Aorta (tissue), 5 donors: ENCODE measurements at regions of chr10 and their contacts with region 1.

Region 1: GRCh38 chr10:121598207-121598862 is at the start of gene FGFR2:
- DNase-seq: peak; percentile 81 to 93
- ATAC-seq: peak; percentile 92
- H3K4me3 ChIP-seq: peak within 1 kb of the TSS; percentile 62 to 73
- H3K27ac ChIP-seq: peak within 1 kb of the TSS in 1 of 2 donors; percentile 85
- H3K4me1 ChIP-seq: no peaks in the 10 kb centered on the region
- H3K27me3 ChIP-seq: no peaks in the 10 kb centered on the region
- total RNA-seq, gene FGFR2: 5.8 to 13.1 TPM

Region 2: GRCh38 chr10:121096617-121097461 is 501.5 kb before region 1 on chr10:
- intact Hi-C with region 1: loop called in 1 of 2 experiments (anchors 10 kb)
- DNase-seq: peak in 1 of 2 donors; percentile 53
- ATAC-seq: peak; percentile 53
- H3K4me3 ChIP-seq: no peak overlapping the region
- H3K27ac ChIP-seq: no peak overlapping the region
- H3K4me1 ChIP-seq: no peaks in the 10 kb centered on the region
- H3K27me3 ChIP-seq: no peaks in the 10 kb centered on the region

Region 3: DNA sequence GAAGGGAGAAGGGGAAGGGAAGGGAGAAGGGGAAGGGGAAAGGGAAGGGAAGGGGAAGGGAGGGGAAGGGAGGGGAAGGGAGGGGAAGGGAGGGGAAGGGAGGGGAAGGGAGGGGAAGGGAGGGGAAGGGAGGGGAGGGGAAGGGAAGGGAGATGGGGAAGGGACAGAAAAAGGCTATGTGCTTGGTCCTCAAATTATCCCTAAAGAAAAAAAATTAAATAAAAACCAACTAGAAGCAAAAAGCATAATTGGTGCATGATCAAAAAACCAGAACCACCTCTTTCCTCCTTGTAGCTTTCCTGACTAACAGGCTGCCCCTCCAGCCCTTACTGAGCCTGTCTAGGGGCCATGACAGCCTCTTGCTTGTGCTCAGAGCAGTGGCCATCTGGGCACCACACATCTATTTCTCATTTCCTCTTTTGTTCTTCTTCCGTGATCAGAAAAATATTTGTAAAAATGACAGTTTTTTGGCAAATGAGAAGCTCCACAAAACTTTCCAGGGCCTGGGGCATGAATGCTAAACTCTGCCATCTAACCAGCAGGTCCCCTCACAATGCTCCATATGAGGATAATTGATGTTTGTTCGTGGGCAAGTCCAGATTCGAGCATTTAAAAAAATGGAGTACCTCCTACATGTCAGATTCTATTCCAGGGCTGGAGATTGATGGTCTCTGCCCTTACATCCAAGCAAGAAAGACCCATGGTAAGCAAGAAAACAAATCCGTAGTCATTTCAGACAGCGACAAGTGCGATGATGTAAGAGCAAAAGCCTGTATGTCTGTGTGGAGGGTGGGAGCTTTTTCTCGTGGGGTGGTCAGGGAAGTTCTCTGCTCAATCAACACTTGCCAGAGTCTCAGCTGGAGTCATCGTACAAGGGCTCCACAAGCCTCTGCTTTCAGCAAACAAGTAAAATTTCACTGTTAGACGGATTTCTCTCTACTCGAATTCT is 426.2 kb before region 1 on chr10:
- intact Hi-C with region 1: loop called in 1 of 2 experiments (anchors 10 kb)
- DNase-seq: no peak
- ATAC-seq: no peak
- H3K4me3 ChIP-seq: no peak overlapping the region
- H3K27ac ChIP-seq: no peak overlapping the region
- H3K4me1 ChIP-seq: peaks cover 0 to 4% of the 10 kb centered on the region in 2 donors
- H3K27me3 ChIP-seq: no peaks in the 10 kb centered on the region

Region 4: GRCh38 chr10:121459765-121460453 is 138.4 kb before region 1 on chr10:
- intact Hi-C with region 1: loop called (anchors 5 kb)
- DNase-seq: peak; percentile 65 to 75
- ATAC-seq: peak; percentile 74
- H3K4me3 ChIP-seq: no peak overlapping the region
- H3K27ac ChIP-seq: peak overlapping the region; percentile 65 to 73
- H3K4me1 ChIP-seq: no peaks in the 10 kb centered on the region
- H3K27me3 ChIP-seq: no peaks in the 10 kb centered on the region

Region 5: DNA sequence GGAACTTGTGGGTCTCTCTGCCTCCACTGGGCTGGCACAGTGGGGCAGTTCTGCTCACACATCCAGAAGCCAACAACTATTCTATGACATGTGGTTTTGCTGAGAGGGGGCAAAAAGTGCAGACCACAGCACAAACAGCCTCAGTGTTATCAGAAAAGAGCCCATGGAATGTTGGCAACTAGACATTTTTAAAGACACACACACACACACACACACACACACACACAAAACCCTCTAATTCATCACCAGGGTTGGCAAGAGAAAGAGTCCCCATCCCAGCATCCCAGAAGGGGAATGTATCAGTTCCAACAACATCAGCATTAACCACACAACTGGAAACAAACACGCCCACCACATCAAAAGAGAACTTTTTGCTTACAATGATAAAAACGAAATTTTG is 117.1 kb before region 1 on chr10:
- intact Hi-C with region 1: no loop called
- DNase-seq: no peak
- ATAC-seq: no peak
- H3K4me3 ChIP-seq: no peak overlapping the region
- H3K27ac ChIP-seq: no peak overlapping the region
- H3K4me1 ChIP-seq: no peaks in the 10 kb centered on the region
- H3K27me3 ChIP-seq: no peaks in the 10 kb centered on the region

Region 6: GRCh38 chr10:121527666-121528065 is 70.7 kb before region 1 on chr10:
- intact Hi-C with region 1: no loop called
- DNase-seq: no peak
- ATAC-seq: no peak
- H3K4me3 ChIP-seq: no peak overlapping the region
- H3K27ac ChIP-seq: no peak overlapping the region
- H3K4me1 ChIP-seq: peaks cover 0 to 3% of the 10 kb centered on the region in 2 donors
- H3K27me3 ChIP-seq: no peaks in the 10 kb centered on the region